ENCODE measurements at regions of chr7 and their contacts with region 1.

Region 1: GRCh38 chr7:122528879-122529481 is 169.9 kb downstream of the RNF133 start:
- DNase-seq: peak; percentile 77

Region 2: DNA sequence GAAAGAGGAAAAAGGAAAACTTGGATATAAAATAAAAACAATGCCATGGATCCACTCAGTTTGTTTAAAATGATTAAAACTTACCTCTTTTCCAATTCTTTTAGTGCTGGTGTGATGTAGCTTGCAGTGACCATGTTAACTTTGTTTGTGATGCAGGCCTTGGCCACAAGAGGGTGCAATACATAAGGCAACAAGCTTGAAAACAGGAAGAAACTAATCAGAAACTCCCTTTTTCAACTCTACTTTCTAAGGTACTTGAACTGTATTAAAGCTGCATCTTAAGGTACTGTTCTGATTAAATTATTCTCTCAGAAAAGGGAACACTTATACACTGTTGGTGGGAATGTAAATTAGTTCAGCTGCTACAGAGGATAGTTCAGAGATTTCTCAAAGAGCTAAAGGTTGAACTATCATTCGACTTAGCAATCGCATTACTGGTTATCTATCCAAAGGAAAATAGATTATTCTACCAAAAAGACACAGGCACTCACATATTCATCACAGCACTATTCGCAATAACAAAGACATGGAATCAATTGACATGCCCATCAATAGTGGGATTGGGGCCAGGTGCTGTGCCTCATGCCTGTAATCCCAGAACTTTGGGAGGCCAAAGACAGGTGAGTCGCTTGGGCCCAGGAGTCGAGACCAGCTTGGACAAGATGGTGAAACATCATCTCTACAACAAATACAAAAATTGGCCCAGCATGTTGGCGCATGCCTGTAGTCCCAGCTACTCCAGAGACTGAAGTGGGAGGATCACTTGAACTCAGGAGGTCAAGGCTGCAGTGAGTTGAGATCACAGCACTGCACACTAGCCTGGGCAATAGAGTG is 435.8 kb before region 1 on chr7:
- in situ Hi-C with region 1: loop called (anchors 25 kb)
- DNase-seq: peak; percentile 86

Region 3: GRCh38 chr7:122225874-122226273 is 303.1 kb before region 1 on chr7:
- in situ Hi-C with region 1: loop called (anchors 10 kb)
- DNase-seq: peak; percentile 96

Region 4: GRCh38 chr7:122628651-122629411 is 99.9 kb after region 1 on chr7:
- in situ Hi-C with region 1: no loop called
- DNase-seq: no peak

Measured in SK-MEL-5 (cell line).